Caco-2 (cell line): ENCODE measurements at regions of chr15 and their contacts with region 1.

Region 1: GRCh38 chr15:40763801-40764732 is at the start of gene GCHFR:
- DNase-seq: peak; percentile 90 to 93
- H3K4me3 ChIP-seq: peak within 1 kb of the TSS; percentile 92
- H3K4me3 Mint-ChIP-seq: peak within 1 kb of the TSS; percentile 86
- H3K27ac Mint-ChIP-seq: peak within 1 kb of the TSS; percentile 90
- H3K4me1 ChIP-seq: peaks cover 7% of the 10 kb centered on the region; the same call in 1 of the 2 replicates
- H3K4me1 Mint-ChIP-seq: peaks cover 11% of the 10 kb centered on the region
- H3K27me3 ChIP-seq: no peaks in the 10 kb centered on the region
- H3K27me3 Mint-ChIP-seq: no peaks in the 10 kb centered on the region
- CTCF ChIP-seq: peak; percentile 17 to 49
- total RNA-seq, gene GCHFR: 54.4 and 59.2 TPM in 2 replicates

Region 2: GRCh38 chr15:40746916-40747514 is 17.1 kb before region 1 on chr15:
- CTCF ChIA-PET with region 1: interaction called, 25 read pairs
- POLR2A ChIA-PET with region 1: no interaction called
- intact Hi-C with region 1: loop called (anchors 2 kb)
- DNase-seq: no peak
- H3K4me3 ChIP-seq: no peak overlapping the region
- H3K4me3 Mint-ChIP-seq: no peak overlapping the region
- H3K27ac Mint-ChIP-seq: peak overlapping the region; percentile 42
- H3K4me1 ChIP-seq: peaks cover 15% of the 10 kb centered on the region
- H3K4me1 Mint-ChIP-seq: peaks cover 12% of the 10 kb centered on the region
- H3K27me3 ChIP-seq: no peaks in the 10 kb centered on the region
- H3K27me3 Mint-ChIP-seq: no peaks in the 10 kb centered on the region
- CTCF ChIP-seq: no peak

Region 3: DNA sequence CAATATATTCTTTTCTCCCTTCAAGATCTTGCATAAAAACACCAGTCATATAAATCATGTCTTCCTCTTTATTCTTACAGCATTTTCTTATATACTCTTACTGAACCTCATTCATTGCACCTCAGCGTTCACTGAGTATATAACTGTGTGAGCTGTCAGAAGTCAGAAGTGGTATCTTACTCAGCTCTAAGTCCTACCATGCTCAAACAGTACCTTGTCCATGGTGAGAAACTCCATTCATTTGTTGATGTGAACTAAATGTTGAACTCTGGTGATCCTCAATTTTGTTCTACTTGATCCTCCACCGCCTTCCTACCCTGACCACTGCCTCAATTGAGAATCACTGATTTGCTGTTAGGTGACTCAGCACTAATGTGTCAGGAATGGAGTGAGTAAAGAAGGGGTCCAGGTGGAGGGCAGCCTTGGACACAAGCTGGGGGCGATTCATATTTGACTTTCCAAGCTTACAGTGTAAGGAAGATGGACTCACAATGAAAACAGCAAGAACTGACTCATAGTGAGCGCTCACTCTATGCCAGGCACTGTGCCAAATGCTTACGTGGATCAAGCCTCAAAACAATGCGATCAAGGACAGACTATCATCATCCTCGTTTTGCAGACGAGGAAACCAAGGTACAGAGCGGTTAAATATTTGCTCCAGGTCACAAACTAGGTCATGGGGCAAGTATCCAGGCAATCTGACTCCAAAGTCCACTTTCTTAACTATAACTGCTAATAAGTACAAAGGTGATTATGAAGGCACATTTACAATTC is 29.3 kb after region 1 on chr15:
- CTCF ChIA-PET with region 1: no interaction called
- POLR2A ChIA-PET with region 1: no interaction called
- intact Hi-C with region 1: no loop called
- DNase-seq: no peak
- H3K4me3 ChIP-seq: no peak overlapping the region
- H3K4me3 Mint-ChIP-seq: no peak overlapping the region
- H3K27ac Mint-ChIP-seq: no peak overlapping the region
- H3K4me1 ChIP-seq: peaks cover 25% of the 10 kb centered on the region
- H3K4me1 Mint-ChIP-seq: peaks cover 34% of the 10 kb centered on the region
- H3K27me3 ChIP-seq: no peaks in the 10 kb centered on the region
- H3K27me3 Mint-ChIP-seq: no peaks in the 10 kb centered on the region
- CTCF ChIP-seq: no peak

Region 4: GRCh38 chr15:40807028-40807887 is 43.2 kb after region 1 on chr15 and contains the starts of genes DNAJC17 and ZFYVE19:
- CTCF ChIA-PET with region 1: interaction called, 5 read pairs
- POLR2A ChIA-PET with region 1: interaction called, 10 read pairs
- intact Hi-C with region 1: no loop called
- DNase-seq: peak; percentile 96 to 97
- H3K4me3 ChIP-seq: peak within 1 kb of the TSS; percentile 88
- H3K4me3 Mint-ChIP-seq: peak within 1 kb of the TSS; percentile 95
- H3K27ac Mint-ChIP-seq: peak within 1 kb of the TSS; percentile 94
- H3K4me1 ChIP-seq: 0 out of 2 replicates have a peak, but pooled peaks cover 4% of the 10 kb centered on the region
- H3K4me1 Mint-ChIP-seq: no peaks in the 10 kb centered on the region
- H3K27me3 ChIP-seq: no peaks in the 10 kb centered on the region
- H3K27me3 Mint-ChIP-seq: no peaks in the 10 kb centered on the region
- CTCF ChIP-seq: no peak
- total RNA-seq, gene DNAJC17: 26.3 and 30.1 TPM in 2 replicates
- total RNA-seq, gene ZFYVE19: 26.7 and 26.9 TPM in 2 replicates

Region 5: DNA sequence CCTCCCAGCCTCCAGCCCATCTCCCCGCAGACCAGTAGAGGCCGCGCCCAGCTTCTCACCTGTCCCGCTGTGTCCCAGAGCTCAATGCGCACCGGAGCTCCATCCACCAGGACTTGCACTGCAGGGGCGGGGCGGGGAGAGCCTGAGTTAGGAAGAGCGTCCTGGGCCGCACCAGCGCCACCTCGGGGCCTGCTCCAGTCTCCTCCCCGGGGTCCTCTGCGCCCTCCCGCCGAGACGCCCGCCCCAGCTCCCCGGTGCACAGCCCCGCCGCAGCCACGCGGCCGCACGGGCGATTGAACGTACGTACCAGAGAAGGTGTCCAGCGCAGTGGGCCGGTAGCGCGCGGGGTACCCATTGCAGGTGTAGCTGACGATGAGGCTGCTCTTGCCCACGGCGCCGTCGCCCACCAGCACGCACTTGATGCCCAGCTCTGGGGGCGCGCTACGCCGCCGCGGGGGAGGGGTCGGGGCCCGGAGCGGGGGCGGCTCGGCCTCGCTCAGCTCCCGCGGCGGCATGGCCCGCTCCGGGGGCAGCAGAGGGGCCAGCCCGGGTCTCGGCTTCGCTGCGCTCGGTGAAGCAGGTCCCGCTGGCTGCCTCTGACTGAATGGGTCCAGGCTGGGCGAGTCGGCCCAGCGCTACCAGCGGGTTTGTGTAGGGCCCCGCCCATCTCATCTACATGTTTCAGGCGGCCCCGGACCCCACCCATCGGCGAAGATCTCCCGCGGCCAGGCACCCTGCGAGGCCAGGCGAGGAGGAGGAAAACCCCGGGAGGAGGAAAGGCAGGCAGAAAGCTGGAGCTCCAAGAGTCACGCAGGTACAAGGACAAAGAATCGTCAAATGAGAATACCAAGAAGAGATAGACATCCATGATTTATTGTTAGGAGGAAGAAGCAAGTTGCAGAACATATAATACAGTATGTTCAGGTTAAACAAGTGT is 109.8 kb after region 1 on chr15 and contains the start of gene RHOV:
- CTCF ChIA-PET with region 1: interaction called, 10 read pairs
- POLR2A ChIA-PET with region 1: interaction called, 3 read pairs
- intact Hi-C with region 1: no loop called
- DNase-seq: peak; percentile 90 to 92
- H3K4me3 ChIP-seq: peak within 1 kb of the TSS; percentile 88
- H3K4me3 Mint-ChIP-seq: peak within 1 kb of the TSS; percentile 68
- H3K27ac Mint-ChIP-seq: peak within 1 kb of the TSS; percentile 64
- H3K4me1 ChIP-seq: peaks cover 15% of the 10 kb centered on the region
- H3K4me1 Mint-ChIP-seq: peaks cover 8% of the 10 kb centered on the region
- H3K27me3 ChIP-seq: no peaks in the 10 kb centered on the region
- H3K27me3 Mint-ChIP-seq: no peaks in the 10 kb centered on the region
- CTCF ChIP-seq: peak in 1 of 2 experiments; percentile 59
- total RNA-seq, gene RHOV: 3.2 and 4.4 TPM in 2 replicates

Region 6: DNA sequence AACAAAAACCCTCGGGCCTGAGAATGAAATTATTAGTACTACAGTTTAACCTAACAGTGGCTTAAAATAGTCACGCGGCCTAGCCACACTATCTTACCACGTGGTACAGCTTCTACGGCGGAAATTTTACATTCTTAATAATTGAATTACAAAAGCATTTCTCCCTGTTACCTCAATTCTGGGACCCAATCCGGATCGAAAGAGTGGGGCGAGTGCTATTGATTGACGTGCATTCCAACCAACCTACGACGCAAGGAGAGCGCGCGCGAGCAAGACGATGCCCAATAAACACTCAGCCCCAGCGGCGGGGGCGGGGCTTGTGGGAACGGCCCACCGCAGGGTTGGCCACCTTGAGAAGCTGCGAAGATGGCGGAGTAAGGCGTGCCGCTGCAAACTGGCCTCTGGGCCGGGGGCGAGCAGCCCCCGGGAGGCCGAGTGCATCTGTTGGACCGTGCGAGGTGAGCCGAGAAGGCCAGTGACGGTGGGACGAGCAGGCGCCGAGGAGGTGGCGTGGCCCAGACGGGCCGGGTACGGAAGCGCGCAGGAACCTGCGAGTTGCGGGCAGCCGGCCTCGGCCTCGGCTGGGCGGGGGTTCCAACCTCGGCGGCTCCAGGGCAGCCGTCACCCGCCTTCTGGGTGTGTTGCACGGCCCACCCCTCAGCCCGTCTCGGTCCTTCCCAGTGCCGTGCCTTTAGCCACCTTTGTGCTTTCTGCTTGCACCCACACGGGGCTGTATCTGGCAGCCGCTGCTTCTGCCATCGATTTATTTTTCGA is 519.8 kb after region 1 on chr15:
- CTCF ChIA-PET with region 1: no interaction called
- POLR2A ChIA-PET with region 1: no interaction called
- intact Hi-C with region 1: no loop called
- DNase-seq: peak; percentile 98
- H3K4me3 ChIP-seq: peak overlapping the region; percentile 81
- H3K4me3 Mint-ChIP-seq: peak overlapping the region; percentile 95
- H3K27ac Mint-ChIP-seq: peak overlapping the region; percentile 97
- H3K4me1 ChIP-seq: peaks cover 11% of the 10 kb centered on the region; the same call in 1 of the 2 replicates
- H3K4me1 Mint-ChIP-seq: peaks cover 14% of the 10 kb centered on the region
- H3K27me3 ChIP-seq: no peaks in the 10 kb centered on the region
- H3K27me3 Mint-ChIP-seq: no peaks in the 10 kb centered on the region
- CTCF ChIP-seq: no peak